Natural killer cell (primary cell): ENCODE measurements at regions of chr16 and their contacts with region 1.

Region 1: DNA sequence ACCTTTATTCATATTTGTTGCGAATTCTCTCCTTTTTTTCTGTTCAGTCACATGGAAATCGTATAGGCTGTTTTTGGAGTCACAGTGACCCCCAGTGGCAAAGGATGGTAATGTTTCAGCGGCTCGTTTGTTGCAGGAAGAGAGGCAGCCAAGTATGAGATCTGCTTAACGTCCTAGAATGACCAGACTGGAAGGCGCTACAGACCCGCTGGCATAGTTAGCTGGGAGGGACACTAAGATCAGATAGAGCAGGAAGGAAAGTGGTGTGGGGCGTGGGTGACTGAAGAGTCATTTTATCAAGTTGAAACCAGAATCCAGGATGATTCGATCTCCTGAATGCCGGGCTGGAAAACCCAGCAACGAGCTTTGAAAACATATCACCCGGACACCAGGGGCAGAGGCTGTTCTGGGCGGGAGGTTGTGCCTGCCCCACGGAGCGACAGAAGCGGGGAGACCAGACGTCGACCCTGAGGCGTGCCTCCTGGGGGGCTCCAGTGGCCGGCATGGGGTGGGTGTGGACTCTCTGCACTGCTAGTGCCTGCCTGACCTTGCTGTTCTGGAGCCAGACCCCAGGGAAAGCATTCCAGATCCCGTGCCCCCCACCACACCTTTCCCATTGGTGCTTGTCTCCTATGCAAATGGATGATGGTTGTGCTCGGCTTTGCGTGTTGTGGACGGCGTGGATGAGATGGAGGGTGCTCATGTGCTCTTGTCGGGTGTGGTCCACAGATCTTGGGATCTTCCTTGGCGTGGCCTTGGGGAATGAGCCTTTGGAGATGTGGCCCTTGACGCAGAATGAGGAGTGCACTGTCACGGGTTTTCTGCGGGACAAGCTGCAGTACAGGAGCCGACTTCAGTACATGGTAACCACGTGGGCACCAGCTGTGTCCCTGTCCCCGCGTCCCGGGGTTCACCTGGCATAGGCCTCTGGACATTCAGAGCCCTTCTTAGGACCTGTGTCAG is 7.7 kb downstream of the IL34 start:
- DNase-seq: peak; percentile 71 to 87
- ATAC-seq: peak; percentile 81 to 86 (median 83)
- H3K4me3 ChIP-seq: no peak overlapping the region
- H3K4me3 Mint-ChIP-seq: peak overlapping the region; percentile 41
- H3K27ac ChIP-seq: no peak overlapping the region
- H3K27ac Mint-ChIP-seq: no peak overlapping the region
- H3K4me1 ChIP-seq: peaks cover 4% of the 10 kb centered on the region
- H3K4me1 Mint-ChIP-seq: peaks cover 5 to 6% of the 10 kb centered on the region in 2 donors
- H3K27me3 ChIP-seq: no peaks in the 10 kb centered on the region
- H3K27me3 Mint-ChIP-seq: peaks cover 0 to 6% of the 10 kb centered on the region in 2 donors
- CTCF ChIP-seq: peak; percentile 87

Region 2: GRCh38 chr16:69709456-69710084 is 944.5 kb before region 1 on chr16:
- intact Hi-C with region 1: loop called (anchors 10 kb)
- DNase-seq: peak in 1 of 2 donors; percentile 81
- ATAC-seq: peak in 2 of 3 donors; percentile 62 to 70
- H3K4me3 ChIP-seq: no peak overlapping the region
- H3K4me3 Mint-ChIP-seq: no peak overlapping the region
- H3K27ac ChIP-seq: no peak overlapping the region
- H3K27ac Mint-ChIP-seq: peak overlapping the region; percentile 32 to 65
- H3K4me1 ChIP-seq: no peaks in the 10 kb centered on the region
- H3K4me1 Mint-ChIP-seq: peaks cover 0 to 7% of the 10 kb centered on the region in 2 donors
- H3K27me3 ChIP-seq: no peaks in the 10 kb centered on the region
- H3K27me3 Mint-ChIP-seq: no peaks in the 10 kb centered on the region
- CTCF ChIP-seq: peak; percentile 77

Region 3: DNA sequence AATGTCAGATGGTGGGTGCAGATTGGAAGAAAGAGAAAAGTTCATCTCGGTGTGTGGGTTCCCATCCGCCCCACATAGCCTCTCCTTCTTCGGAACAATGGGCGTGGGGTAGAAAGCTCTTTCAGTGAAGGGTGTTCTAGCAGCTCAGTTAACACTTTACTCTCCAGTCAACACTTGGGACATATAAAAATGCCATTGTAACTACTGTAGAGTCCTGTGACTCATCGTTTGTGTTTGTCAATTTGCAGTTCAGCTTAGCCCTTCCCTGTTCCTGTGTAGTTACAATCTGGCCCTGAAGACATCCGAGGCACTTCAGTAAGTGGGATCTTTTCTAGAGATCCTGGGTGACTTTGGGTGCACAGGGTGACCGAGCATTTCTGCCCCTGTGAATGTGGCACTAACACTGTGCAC is 492.0 kb before region 1 on chr16:
- intact Hi-C with region 1: loop called (anchors 10 kb)
- DNase-seq: peak in 1 of 2 donors; percentile 5
- ATAC-seq: no peak
- H3K4me3 ChIP-seq: no peak overlapping the region
- H3K4me3 Mint-ChIP-seq: no peak overlapping the region
- H3K27ac ChIP-seq: no peak overlapping the region
- H3K27ac Mint-ChIP-seq: peak overlapping the region in 1 of 2 donors; percentile 37
- H3K4me1 ChIP-seq: peaks cover 7% of the 10 kb centered on the region
- H3K4me1 Mint-ChIP-seq: peaks cover 0 to 5% of the 10 kb centered on the region in 2 donors
- H3K27me3 ChIP-seq: no peaks in the 10 kb centered on the region
- H3K27me3 Mint-ChIP-seq: no peaks in the 10 kb centered on the region
- CTCF ChIP-seq: no peak

Region 4: DNA sequence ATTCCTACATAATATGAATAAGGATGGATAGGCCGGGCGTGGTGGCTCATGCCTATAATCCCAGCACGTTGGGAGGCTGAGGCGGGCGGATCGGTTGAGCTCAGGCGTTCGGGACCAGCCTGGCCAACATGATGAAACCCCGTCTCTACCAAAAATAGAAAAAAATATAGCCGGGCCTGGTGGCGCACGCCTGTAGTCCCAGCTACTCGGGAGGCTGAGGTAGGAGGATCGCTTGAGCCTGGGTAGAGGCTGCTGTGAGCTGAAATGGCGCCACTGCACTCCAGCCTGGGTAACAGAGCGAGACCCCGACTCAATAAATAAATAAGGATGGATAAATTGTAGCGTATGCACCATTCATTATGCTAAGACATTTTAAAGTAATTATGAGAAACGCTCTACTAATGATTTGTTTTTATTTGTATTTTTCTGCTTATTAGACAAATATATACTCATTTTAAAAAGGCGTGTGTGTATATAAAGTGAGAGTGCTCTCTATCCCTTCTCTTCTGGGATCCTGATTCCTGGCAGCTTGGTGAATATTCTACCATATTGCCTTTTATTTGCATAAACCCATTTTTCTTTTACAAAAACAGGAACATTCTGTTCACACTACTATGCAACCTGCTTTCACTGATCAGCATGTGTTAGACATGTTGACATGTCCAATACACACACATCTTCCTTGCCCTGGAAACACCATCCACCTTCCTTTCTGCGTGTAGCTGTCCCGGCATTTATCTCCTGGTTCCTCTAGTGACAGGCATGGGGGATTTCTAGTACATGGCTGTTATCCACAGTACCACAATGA is 281.0 kb before region 1 on chr16:
- intact Hi-C with region 1: loop called (anchors 5 kb)
- DNase-seq: no peak
- ATAC-seq: no peak
- H3K4me3 ChIP-seq: no peak overlapping the region
- H3K4me3 Mint-ChIP-seq: no peak overlapping the region
- H3K27ac ChIP-seq: no peak overlapping the region
- H3K27ac Mint-ChIP-seq: peak overlapping the region; percentile 48 to 56
- H3K4me1 ChIP-seq: peaks cover 3% of the 10 kb centered on the region
- H3K4me1 Mint-ChIP-seq: no peaks in the 10 kb centered on the region
- H3K27me3 ChIP-seq: no peaks in the 10 kb centered on the region
- H3K27me3 Mint-ChIP-seq: no peaks in the 10 kb centered on the region
- CTCF ChIP-seq: no peak

Region 5: GRCh38 chr16:71626018-71626857 is 972.1 kb after region 1 on chr16 and contains the start of gene MARVELD3:
- intact Hi-C with region 1: no loop called
- DNase-seq: peak in 1 of 2 donors; percentile 31
- ATAC-seq: no peak
- H3K4me3 ChIP-seq: peak within 1 kb of the TSS; percentile 39
- H3K4me3 Mint-ChIP-seq: no peak within 1 kb of the TSS
- H3K27ac ChIP-seq: no peak within 1 kb of the TSS
- H3K27ac Mint-ChIP-seq: no peak within 1 kb of the TSS
- H3K4me1 ChIP-seq: peaks cover 11% of the 10 kb centered on the region
- H3K4me1 Mint-ChIP-seq: peaks cover 7 to 8% of the 10 kb centered on the region in 2 donors
- H3K27me3 ChIP-seq: peaks cover 17% of the 10 kb centered on the region
- H3K27me3 Mint-ChIP-seq: peaks cover 14 to 18% of the 10 kb centered on the region in 2 donors
- CTCF ChIP-seq: no peak
- total RNA-seq, gene MARVELD3: not detected